ENCODE measurements at regions of chr19 and their contacts with region 1.

Region 1: DNA sequence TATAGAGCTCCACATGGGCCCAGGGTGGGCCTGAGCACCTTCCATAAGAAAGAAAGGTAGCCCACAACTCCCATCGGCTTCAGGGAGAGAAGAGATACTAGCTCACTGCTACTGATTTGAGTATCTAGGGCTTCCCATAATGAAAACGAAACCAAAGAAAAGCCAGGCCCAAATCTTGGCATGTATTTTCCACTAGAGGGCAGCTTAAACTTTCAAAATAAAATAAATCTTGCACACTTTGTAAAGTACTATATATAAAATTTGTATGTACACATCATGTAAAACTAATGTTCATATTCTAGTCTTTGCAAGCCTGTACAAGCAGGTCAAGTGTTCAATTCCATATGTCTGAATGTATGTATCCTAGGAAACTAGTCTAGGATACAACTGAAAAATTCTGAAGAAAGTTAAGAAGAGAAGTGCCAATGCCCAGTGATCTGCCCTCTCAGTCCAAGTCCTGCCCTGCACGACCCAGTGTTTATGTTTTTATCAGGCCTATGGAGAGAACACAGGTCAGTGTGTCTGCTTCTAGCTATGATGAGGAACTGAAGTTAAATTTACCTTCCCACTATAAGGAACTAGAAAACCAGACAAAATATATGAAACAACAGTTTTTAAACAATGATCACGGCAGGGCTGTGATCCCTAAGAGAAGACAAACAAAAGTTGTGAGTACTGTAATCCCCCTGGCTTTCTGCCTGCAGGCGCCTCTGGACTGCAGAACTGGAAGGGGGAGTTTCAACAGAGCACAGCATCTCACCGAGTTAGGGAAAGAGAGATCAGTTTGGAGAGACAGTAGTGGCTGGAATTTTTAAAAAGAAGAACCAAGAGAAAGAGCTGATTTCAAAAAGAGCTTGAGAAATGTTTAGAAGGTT is 475.7 kb downstream of the UQCRFS1 start:
- DNase-seq: no peak
- H3K4me3 ChIP-seq: no peak overlapping the region
- H3K27ac ChIP-seq: no peak overlapping the region
- H3K4me1 ChIP-seq: peaks cover 0 to 2% (median 0%) of the 10 kb centered on the region in 4 experiments; a peak in 1 of 7 replicates
- H3K27me3 ChIP-seq: no peaks in the 10 kb centered on the region
- CTCF ChIP-seq: peak in 2 of 3 experiments; percentile 43 to 47; a peak in 2 of 4 replicates
- EP300 ChIP-seq: no peak
- POLR2A ChIP-seq: no peak
- RAD21 ChIP-seq: peak; percentile 53 to 57

Region 2: GRCh38 chr19:28504139-28504538 is 233.1 kb before region 1 on chr19:
- CTCF ChIA-PET with region 1: no interaction called
- POLR2A ChIA-PET with region 1: no interaction called
- DNase-seq: no peak
- H3K4me3 ChIP-seq: no peak overlapping the region
- H3K27ac ChIP-seq: no peak overlapping the region
- H3K4me1 ChIP-seq: peaks cover 0 to 5% (median 2%) of the 10 kb centered on the region in 4 experiments; a peak in 4 of 7 replicates
- H3K27me3 ChIP-seq: no peaks in the 10 kb centered on the region; a peak in 1 of 7 replicates
- CTCF ChIP-seq: no peak
- EP300 ChIP-seq: no peak
- POLR2A ChIP-seq: no peak
- RAD21 ChIP-seq: no peak

Region 3: GRCh38 chr19:28785971-28786370 is 48.7 kb after region 1 on chr19:
- CTCF ChIA-PET with region 1: no interaction called
- POLR2A ChIA-PET with region 1: no interaction called
- DNase-seq: no peak
- H3K4me3 ChIP-seq: no peak overlapping the region
- H3K27ac ChIP-seq: no peak overlapping the region
- H3K4me1 ChIP-seq: peaks cover 0 to 5% (median 0%) of the 10 kb centered on the region in 4 experiments; a peak in 1 of 7 replicates
- H3K27me3 ChIP-seq: no peaks in the 10 kb centered on the region
- CTCF ChIP-seq: no peak
- EP300 ChIP-seq: no peak
- POLR2A ChIP-seq: no peak
- RAD21 ChIP-seq: no peak

Region 4: GRCh38 chr19:28843737-28844492 is 106.7 kb after region 1 on chr19:
- CTCF ChIA-PET with region 1: interaction called, 16 read pairs
- POLR2A ChIA-PET with region 1: no interaction called
- DNase-seq: no peak
- H3K4me3 ChIP-seq: no peak overlapping the region
- H3K27ac ChIP-seq: no peak overlapping the region
- H3K4me1 ChIP-seq: peaks cover 0 to 15% (median 7%) of the 10 kb centered on the region in 4 experiments; a peak in 6 of 7 replicates
- H3K27me3 ChIP-seq: peaks cover 0 to 2% (median 0%) of the 10 kb centered on the region in 4 experiments; a peak in 2 of 7 replicates
- CTCF ChIP-seq: no peak
- EP300 ChIP-seq: no peak
- POLR2A ChIP-seq: no peak
- RAD21 ChIP-seq: no peak

Region 5: GRCh38 chr19:28855216-28855615 is 118.0 kb after region 1 on chr19:
- CTCF ChIA-PET with region 1: interaction called, 26 read pairs
- POLR2A ChIA-PET with region 1: no interaction called
- DNase-seq: no peak
- H3K4me3 ChIP-seq: no peak overlapping the region
- H3K27ac ChIP-seq: no peak overlapping the region
- H3K4me1 ChIP-seq: no peaks in the 10 kb centered on the region
- H3K27me3 ChIP-seq: peaks cover 0 to 1% (median 0%) of the 10 kb centered on the region in 4 experiments; a peak in 2 of 7 replicates
- CTCF ChIP-seq: no peak
- EP300 ChIP-seq: no peak
- POLR2A ChIP-seq: no peak
- RAD21 ChIP-seq: no peak

Region 6: DNA sequence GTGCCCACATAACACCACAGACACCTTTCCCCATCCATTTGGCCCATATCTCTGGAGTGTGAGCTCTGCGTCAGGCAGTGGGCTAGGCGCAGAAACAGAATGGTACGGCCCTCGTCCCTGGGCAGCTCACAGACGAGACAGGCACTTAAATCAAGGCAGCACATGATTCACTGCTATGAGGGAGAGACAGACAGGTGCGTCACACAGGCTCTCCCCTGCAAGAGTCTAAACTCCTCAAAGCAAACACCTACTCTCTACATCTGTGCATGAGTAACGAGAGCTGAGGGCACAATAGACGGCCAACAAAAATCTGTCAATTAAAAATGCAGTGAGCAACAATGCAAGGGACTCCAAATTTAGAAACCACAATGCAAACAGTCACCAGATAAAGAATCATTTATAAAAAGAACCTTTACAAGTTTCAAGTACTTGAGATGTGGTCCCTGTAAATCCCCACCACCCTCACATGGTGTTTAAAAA is 126.8 kb after region 1 on chr19:
- CTCF ChIA-PET with region 1: interaction called, 26 read pairs
- POLR2A ChIA-PET with region 1: no interaction called
- DNase-seq: no peak
- H3K4me3 ChIP-seq: no peak overlapping the region
- H3K27ac ChIP-seq: no peak overlapping the region
- H3K4me1 ChIP-seq: no peaks in the 10 kb centered on the region; a peak in 1 of 7 replicates
- H3K27me3 ChIP-seq: no peaks in the 10 kb centered on the region; a peak in 1 of 7 replicates
- CTCF ChIP-seq: no peak
- EP300 ChIP-seq: no peak
- POLR2A ChIP-seq: no peak
- RAD21 ChIP-seq: no peak